ENCODE measurements at regions of chr19 and their contacts with region 1.

Region 1: DNA sequence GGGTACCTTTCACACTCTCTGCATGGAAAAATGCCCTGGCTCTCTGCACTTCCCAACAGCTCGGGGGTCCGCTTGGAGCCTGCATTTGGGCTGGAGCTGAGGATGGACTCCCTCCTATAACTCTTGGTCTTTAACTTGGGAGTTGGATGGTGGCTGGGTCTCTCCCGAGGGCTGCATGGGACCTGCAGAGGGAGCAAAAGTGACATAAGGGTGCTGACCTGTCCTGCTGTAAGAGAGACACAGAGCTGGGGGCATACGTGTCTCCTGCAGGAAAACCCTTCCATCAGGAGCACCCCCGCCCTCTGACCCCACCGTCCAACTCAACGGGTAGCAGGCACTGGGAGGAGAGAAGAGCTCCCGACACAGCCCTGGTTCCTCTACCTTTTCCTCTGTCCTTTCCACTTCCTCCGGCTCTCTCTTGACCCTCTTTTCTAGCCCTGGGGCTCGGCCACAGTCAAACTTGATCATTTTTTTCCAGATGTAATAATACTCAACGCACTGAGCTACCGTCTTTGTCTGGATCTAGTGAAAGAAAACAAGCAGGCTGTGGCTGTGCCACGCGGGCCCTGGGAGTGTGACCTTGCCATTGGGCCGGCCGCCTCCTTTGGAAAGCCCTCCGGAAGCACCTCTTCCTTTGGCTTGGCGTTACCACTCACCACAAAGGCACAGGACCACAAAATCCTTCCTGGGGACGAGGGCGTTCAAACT is 6.8 kb upstream of the NAPA start:
- DNase-seq: no peak
- ATAC-seq: no peak
- H3K4me3 ChIP-seq: no peak overlapping the region
- H3K4me3 Mint-ChIP-seq: no peak overlapping the region
- H3K27ac ChIP-seq: no peak overlapping the region
- H3K27ac Mint-ChIP-seq: no peak overlapping the region
- H3K4me1 ChIP-seq: peaks cover 42 to 45% of the 10 kb centered on the region in 2 donors
- H3K4me1 Mint-ChIP-seq: peaks cover 34% of the 10 kb centered on the region
- H3K27me3 ChIP-seq: peaks cover 2 to 51% (median 23%) of the 10 kb centered on the region in 4 experiments
- H3K27me3 Mint-ChIP-seq: peaks cover 26% of the 10 kb centered on the region
- CTCF ChIP-seq: no peak

Region 2: DNA sequence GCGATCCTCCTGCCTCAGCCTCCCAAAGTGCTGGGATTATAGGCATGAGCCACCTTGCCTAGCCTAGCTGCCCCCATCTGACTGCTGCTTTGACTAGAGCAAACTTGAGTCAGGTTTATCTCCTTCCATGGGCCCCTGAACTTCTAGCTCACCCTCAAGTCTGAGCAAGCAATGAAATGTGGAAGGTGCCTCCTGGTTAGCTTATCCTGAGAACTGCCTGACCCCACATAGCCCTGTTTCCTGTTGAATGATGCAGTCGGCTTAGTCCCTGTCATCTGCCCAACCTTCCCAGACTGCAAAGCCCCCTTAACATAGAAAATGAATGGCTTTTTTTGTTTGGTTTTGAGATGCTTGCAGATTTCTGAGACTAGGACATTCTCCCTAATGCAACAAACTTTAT is 464.3 kb before region 1 on chr19:
- CTCF ChIA-PET with region 1: no interaction called
- POLR2A ChIA-PET with region 1: interaction called, 10 read pairs
- intact Hi-C with region 1: no loop called
- DNase-seq: no peak
- ATAC-seq: no peak
- H3K4me3 ChIP-seq: no peak overlapping the region
- H3K4me3 Mint-ChIP-seq: no peak overlapping the region
- H3K27ac ChIP-seq: no peak overlapping the region
- H3K27ac Mint-ChIP-seq: no peak overlapping the region
- H3K4me1 ChIP-seq: no peaks in the 10 kb centered on the region
- H3K4me1 Mint-ChIP-seq: no peaks in the 10 kb centered on the region
- H3K27me3 ChIP-seq: no peaks in the 10 kb centered on the region
- H3K27me3 Mint-ChIP-seq: peaks cover 4% of the 10 kb centered on the region
- CTCF ChIP-seq: no peak

Region 3: GRCh38 chr19:47447470-47448359 is 73.9 kb before region 1 on chr19:
- CTCF ChIA-PET with region 1: no interaction called
- POLR2A ChIA-PET with region 1: no interaction called
- intact Hi-C with region 1: no loop called
- DNase-seq: peak; percentile 54
- ATAC-seq: no peak
- H3K4me3 ChIP-seq: peak overlapping the region in 1 of 5 experiments; percentile 9
- H3K4me3 Mint-ChIP-seq: peak overlapping the region; percentile 45
- H3K27ac ChIP-seq: no peak overlapping the region
- H3K27ac Mint-ChIP-seq: no peak overlapping the region
- H3K4me1 ChIP-seq: peaks cover 32 to 42% of the 10 kb centered on the region in 2 donors
- H3K4me1 Mint-ChIP-seq: peaks cover 28% of the 10 kb centered on the region
- H3K27me3 ChIP-seq: peaks cover 0 to 70% (median 43%) of the 10 kb centered on the region in 4 experiments
- H3K27me3 Mint-ChIP-seq: peaks cover 77% of the 10 kb centered on the region
- CTCF ChIP-seq: no peak

Region 4: DNA sequence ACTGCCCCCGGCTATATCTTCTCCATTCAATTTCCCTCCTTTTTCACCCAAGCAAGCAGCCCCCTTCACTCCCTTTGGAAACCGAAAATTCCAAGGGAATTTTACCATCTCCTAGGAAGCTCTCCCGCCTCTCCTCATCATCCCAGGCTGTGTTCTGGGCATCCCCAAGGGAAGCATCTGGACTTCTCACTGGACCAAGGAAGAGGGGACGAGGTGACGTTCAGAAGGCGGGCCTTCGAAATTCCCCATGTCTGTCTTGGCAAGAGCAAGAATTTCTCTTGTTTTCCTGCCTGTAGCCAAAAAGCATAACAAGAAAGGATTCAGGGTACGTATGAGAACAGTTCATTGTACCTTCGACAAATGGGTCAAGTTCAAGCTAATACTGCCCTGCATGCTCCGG is 343.5 kb after region 1 on chr19:
- CTCF ChIA-PET with region 1: no interaction called
- POLR2A ChIA-PET with region 1: no interaction called
- intact Hi-C with region 1: no loop called
- DNase-seq: no peak
- ATAC-seq: no peak
- H3K4me3 ChIP-seq: no peak overlapping the region
- H3K4me3 Mint-ChIP-seq: no peak overlapping the region
- H3K27ac ChIP-seq: no peak overlapping the region
- H3K27ac Mint-ChIP-seq: no peak overlapping the region
- H3K4me1 ChIP-seq: no peaks in the 10 kb centered on the region
- H3K4me1 Mint-ChIP-seq: peaks cover 2% of the 10 kb centered on the region
- H3K27me3 ChIP-seq: peaks cover 0 to 11% (median 0%) of the 10 kb centered on the region in 4 experiments
- H3K27me3 Mint-ChIP-seq: peaks cover 29% of the 10 kb centered on the region
- CTCF ChIP-seq: no peak